Tibial artery (tissue), 4 donors: ENCODE measurements at regions of chr14 and their contacts with region 1.

Region 1: DNA sequence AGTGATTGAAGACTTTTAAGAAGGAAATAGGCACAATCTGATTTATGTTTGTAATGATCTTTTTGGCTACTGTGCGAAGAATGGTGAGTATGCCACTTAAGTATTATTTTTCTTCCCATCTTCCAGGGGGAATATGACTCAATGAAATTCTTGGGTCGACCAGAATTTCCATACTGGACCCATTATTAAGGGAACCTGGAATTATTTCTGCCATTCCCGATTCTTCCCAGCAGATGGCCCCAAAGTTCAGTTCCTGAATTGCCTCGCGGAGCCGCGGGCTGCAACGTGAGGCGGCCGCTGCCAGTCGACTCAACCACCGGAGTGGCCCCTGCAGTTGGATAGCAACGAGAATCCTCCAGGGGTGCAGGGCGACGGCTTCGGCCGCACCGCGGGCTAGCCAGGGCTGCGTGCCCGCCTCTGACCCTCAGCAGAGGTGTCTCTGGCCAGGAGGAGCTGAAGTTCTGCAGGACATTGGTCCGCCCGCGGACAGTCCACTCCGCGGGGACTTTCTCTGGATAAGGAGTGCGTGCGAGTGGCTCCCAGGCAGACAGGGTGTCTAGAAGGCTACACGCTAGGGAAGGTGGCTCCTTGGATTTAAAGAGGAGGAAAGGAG is 628 bp upstream of the TSHR start:
- DNase-seq: peak; percentile 78 to 83
- H3K4me3 ChIP-seq: peak overlapping the region; percentile 39 to 54
- H3K27ac ChIP-seq: no peak overlapping the region
- H3K4me1 ChIP-seq: peaks cover 0 to 8% (median 8%) of the 10 kb centered on the region in 4 donors
- H3K27me3 ChIP-seq: peaks cover 0 to 12% of the 10 kb centered on the region in 2 donors
- CTCF ChIP-seq: peak; percentile 72 to 83

Region 2: GRCh38 chr14:80681651-80682050 is 273.1 kb before region 1 on chr14:
- intact Hi-C with region 1: no loop called
- DNase-seq: no peak
- H3K4me3 ChIP-seq: no peak overlapping the region
- H3K27ac ChIP-seq: no peak overlapping the region
- H3K4me1 ChIP-seq: no peaks in the 10 kb centered on the region
- H3K27me3 ChIP-seq: no peaks in the 10 kb centered on the region
- CTCF ChIP-seq: no peak

Region 3: DNA sequence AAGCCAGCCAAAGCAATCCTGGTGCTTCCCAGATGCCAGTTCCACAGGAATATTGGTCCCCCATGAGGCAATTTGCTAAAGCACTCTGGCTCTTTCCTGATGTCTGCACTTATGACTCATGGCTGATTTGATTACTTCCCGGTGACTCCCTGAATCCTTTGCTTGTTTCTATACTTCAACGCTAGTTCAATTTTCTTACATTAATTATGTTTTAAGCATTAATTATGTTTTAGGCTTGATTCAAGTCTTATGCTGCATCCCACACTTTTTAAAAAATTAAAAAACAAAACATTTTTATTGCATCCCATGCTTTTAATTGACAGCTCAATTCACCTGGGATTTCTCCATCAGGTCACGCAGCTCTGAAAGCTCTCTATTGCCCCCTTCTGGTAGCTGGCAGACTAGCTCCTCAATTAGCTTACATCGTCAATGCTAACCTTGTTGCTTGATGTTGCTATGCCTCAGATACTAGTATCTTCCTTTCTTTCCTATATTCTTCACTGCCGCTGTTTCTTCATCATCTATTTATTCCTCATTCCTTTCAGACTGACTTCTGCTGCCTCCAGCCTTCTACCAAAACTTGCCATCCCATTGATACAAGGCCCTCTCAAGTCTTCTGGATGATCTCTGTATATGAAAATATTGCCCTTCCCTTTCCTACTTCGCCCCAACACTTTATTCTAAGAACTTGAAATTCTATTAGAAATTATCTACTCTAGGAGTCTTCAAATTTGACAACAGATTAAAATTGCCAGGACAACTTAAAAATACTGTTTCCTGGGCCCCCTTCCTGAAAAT is 32.6 kb after region 1 on chr14:
- intact Hi-C with region 1: loop called (anchors 5 kb)
- DNase-seq: peak; percentile 64 to 67
- H3K4me3 ChIP-seq: no peak overlapping the region
- H3K27ac ChIP-seq: no peak overlapping the region
- H3K4me1 ChIP-seq: peaks cover 0 to 3% (median 0%) of the 10 kb centered on the region in 4 donors
- H3K27me3 ChIP-seq: peaks cover 0 to 16% of the 10 kb centered on the region in 2 donors
- CTCF ChIP-seq: peak; percentile 90 to 92